ENCODE measurements at regions of chr5 and their contacts with region 1.

Region 1: DNA sequence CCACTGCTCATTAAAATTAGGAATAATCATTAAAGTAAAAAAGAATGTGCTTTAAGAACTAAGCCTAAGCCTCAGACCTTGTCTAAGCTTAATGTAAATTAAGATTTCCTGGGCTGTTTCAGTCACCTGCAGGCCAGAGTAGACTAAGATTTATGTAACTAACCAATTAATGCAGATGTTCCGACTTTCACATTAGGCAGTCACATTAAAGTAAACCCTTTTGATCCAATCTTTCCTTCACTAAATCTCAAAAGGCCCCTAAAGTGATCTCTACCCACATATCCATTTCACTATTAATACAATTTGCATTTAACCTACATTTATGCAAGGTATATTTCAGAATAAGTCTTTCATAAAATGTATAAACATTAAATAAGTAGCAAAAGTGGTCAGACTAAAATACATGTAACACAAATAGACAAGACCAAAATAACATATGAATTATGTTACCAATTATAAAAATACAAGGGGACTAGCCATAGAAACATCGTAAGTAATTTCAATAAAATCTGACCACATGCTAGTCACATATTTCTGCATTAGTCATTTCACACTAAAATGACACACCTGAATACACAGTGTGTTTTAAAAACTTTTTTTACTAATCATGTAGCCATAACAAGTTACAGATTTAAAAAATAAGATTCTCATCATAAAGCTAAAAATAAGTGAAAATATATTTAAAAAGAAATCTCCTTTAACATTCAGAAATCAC is 7.7 kb downstream of the NR3C1 start:
- DNase-seq: no peak
- H3K4me3 ChIP-seq: peak overlapping the region; percentile 88
- H3K27ac ChIP-seq: no peak overlapping the region
- H3K4me1 ChIP-seq: peaks cover 98% of the 10 kb centered on the region
- H3K27me3 ChIP-seq: no peaks in the 10 kb centered on the region
- CTCF ChIP-seq: no peak

Region 2: DNA sequence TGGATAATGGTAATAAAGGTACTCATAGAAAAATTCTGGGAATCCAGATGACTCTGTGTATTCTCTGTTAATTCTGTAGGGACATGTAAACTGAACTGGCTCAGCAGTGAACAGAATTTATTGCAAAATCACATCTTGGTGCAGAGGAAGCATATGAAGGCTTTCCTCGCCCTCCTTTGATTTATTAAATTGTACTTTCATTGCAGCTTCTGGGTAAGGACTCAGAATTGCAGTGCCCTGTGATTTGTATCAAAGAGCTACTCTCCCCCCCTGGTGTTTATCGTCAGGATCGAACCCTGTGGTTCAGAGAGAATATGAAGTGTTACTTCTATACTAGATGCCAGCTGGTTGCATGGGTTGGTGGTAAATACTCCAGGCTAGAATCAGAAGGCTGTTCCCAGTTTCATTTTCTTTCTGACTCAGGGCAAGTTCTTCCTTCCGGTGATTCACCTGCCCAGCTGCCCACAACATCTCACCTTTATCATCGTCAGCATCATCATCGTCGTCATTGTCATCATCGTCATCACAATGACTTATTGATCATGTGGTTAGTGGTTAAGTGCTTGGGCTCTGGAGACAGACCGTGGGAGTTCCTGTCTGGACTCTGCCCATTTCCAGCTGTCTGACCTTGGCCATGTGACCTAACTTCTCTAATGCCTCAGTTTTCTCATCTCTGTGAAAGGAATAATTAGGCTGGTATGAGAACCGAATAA is 386.8 kb before region 1 on chr5:
- intact Hi-C with region 1: loop called (anchors 5 kb)
- DNase-seq: no peak
- H3K4me3 ChIP-seq: no peak overlapping the region
- H3K27ac ChIP-seq: peak overlapping the region; percentile 5
- H3K4me1 ChIP-seq: peaks cover 76% of the 10 kb centered on the region
- H3K27me3 ChIP-seq: no peaks in the 10 kb centered on the region
- CTCF ChIP-seq: no peak

Region 3: GRCh38 chr5:143314659-143315058 is 81.1 kb before region 1 on chr5:
- intact Hi-C with region 1: loop called (anchors 10 kb)
- DNase-seq: no peak
- H3K4me3 ChIP-seq: no peak overlapping the region
- H3K27ac ChIP-seq: no peak overlapping the region
- H3K4me1 ChIP-seq: peaks cover 91% of the 10 kb centered on the region
- H3K27me3 ChIP-seq: no peaks in the 10 kb centered on the region
- CTCF ChIP-seq: no peak

Region 4: GRCh38 chr5:143495821-143496275 is 100.1 kb after region 1 on chr5:
- intact Hi-C with region 1: no loop called
- DNase-seq: no peak
- H3K4me3 ChIP-seq: peak overlapping the region; percentile 3
- H3K27ac ChIP-seq: peak overlapping the region; percentile 59
- H3K4me1 ChIP-seq: peaks cover 43% of the 10 kb centered on the region
- H3K27me3 ChIP-seq: no peaks in the 10 kb centered on the region
- CTCF ChIP-seq: no peak

Measured in left ventricle myocardium inferior (tissue), 1 donor.